BJ (cell line): ENCODE measurements at regions of chr18 and their contacts with region 1.

Region 1: GRCh38 chr18:46173393-46174341 is 69.5 kb downstream of the HAUS1 start:
- DNase-seq: peak; percentile 30
- H3K4me3 ChIP-seq: peak overlapping the region; percentile 98
- H3K27me3 ChIP-seq: no peaks in the 10 kb centered on the region
- CTCF ChIP-seq: peak; percentile 97

Region 2: GRCh38 chr18:46155641-46156051 is 18.0 kb before region 1 on chr18:
- CTCF ChIA-PET with region 1: interaction called, 53 read pairs
- POLR2A ChIA-PET with region 1: no interaction called
- DNase-seq: peak; percentile 82
- H3K4me3 ChIP-seq: no peak overlapping the region
- H3K27me3 ChIP-seq: no peaks in the 10 kb centered on the region
- CTCF ChIP-seq: no peak

Region 3: GRCh38 chr18:46199515-46200147 is 26.0 kb after region 1 on chr18:
- CTCF ChIA-PET with region 1: interaction called, 16 read pairs
- POLR2A ChIA-PET with region 1: no interaction called
- DNase-seq: no peak
- H3K4me3 ChIP-seq: no peak overlapping the region
- H3K27me3 ChIP-seq: no peaks in the 10 kb centered on the region
- CTCF ChIP-seq: no peak

Region 4: DNA sequence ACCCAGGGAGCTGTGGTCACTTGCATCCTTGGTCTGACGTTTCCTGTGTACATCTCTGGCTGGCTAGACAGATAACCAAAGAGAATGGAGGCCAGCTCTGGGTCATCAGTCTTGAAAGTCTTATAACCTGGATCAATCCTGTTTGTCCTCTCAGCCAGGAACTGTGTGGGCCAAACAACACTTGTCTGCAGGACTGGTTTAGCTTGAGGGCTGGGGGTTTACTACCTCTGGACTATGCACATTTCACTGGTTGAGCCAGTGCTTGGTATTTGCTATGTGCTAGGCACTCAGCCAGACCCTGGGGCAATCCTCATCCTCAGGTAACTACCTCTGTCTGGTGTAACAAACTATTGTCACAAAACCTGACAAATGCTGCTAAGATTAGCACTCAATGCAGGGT is 100.2 kb after region 1 on chr18:
- CTCF ChIA-PET with region 1: interaction called, 69 read pairs
- POLR2A ChIA-PET with region 1: interaction called, 3 read pairs
- DNase-seq: no peak
- H3K4me3 ChIP-seq: no peak overlapping the region
- H3K27me3 ChIP-seq: no peaks in the 10 kb centered on the region
- CTCF ChIP-seq: no peak

Region 5: DNA sequence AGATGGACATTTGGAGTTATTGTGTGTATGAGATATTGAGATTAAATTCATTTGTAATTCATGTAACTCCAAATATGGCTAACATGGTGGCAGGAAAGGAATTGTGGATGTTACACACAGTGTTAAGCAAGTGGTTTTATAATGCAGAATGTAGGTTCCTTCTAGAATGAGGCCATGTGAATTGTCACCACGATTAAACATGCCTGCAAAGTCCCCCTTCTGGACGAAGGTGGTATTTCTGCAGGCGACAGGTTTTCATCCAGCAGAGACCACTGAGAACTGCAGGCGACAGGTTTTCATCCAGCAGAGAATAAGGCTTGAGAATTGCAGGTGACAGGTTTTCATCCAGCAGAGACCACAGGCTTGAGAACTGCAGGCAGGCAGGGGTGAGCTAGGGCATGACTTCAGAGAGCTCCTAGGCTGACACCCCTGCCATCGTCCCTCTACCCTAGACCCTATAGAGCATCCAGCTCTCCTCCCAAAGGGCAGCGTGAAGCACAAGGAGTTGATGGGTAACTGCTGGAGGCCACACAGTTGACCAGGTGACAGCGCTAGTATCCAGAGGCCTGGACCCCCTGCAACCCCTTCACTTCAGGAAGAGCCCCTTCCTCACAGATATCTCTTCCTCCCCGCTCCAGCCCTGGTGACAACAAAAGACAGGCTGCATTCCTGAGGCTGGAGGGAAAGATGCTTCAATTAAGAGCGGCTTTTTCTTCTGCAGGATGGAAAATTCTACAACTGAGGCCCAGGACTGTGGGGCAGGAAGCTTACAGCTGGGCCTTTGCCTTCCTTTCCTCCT is 307.6 kb after region 1 on chr18:
- CTCF ChIA-PET with region 1: interaction called, 16 read pairs
- POLR2A ChIA-PET with region 1: no interaction called
- DNase-seq: no peak
- H3K4me3 ChIP-seq: no peak overlapping the region
- H3K27me3 ChIP-seq: peaks cover 9% of the 10 kb centered on the region
- CTCF ChIP-seq: peak; percentile 72

Region 6: DNA sequence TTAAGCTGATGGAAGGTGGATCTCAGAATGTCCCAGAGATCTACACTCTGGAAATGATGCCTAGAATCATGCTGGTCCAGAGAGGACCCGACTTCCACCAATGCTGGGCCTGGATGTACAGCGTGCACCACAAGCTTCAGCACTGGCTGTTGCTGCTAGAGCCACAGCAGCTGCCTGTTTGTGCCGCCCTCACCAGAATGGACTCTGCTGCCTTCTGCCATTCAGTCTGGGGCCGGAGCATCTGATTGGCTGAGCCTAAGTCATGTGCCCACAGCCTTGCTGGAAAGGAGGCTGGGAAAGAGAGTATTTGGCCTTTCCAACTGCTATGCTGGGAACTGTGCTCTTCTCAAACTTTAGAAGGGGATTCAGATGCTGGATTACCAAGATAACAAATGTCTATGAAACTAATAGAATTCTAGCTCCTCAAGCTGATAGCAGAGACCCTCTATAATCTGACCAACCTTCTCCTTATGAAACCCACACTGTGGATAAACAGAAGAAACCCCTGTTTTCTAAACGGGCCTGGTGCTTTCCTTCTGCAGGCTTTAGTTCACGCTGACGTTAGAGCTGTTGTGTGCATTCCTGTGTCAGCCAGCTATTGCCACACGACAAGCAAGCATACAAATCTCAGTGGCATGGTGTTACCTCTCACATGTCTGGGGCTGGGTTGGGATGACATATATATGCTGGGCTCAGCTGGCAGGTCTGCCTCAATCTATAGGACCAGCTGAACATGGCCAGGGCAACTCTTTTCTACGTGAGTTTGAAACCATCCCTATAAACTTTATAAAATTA is 487.5 kb after region 1 on chr18:
- CTCF ChIA-PET with region 1: interaction called, 39 read pairs
- POLR2A ChIA-PET with region 1: no interaction called
- DNase-seq: no peak
- H3K4me3 ChIP-seq: no peak overlapping the region
- H3K27me3 ChIP-seq: peaks cover 6% of the 10 kb centered on the region; the same call in 1 of the 2 replicates
- CTCF ChIP-seq: no peak